MCF 10A (cell line): ENCODE measurements at regions of chr7 and their contacts with region 1.

Region 1: GRCh38 chr7:16982640-16983350 is 101.0 kb upstream of the AGR3 start:
- DNase-seq: peak; percentile 57
- H3K4me3 Mint-ChIP-seq: no peak overlapping the region
- H3K27ac Mint-ChIP-seq: no peak overlapping the region
- H3K4me1 Mint-ChIP-seq: peaks cover 26% of the 10 kb centered on the region
- H3K27me3 Mint-ChIP-seq: no peaks in the 10 kb centered on the region
- CTCF ChIP-seq: peak; percentile 79

Region 2: GRCh38 chr7:17009007-17009719 is 26.4 kb after region 1 on chr7:
- CTCF ChIA-PET with region 1: interaction called, 13 read pairs
- POLR2A ChIA-PET with region 1: interaction called, 3 read pairs
- intact Hi-C with region 1: no loop called
- DNase-seq: peak; percentile 53
- H3K4me3 Mint-ChIP-seq: no peak overlapping the region
- H3K27ac Mint-ChIP-seq: peak overlapping the region; percentile 69
- H3K4me1 Mint-ChIP-seq: peaks cover 29% of the 10 kb centered on the region
- H3K27me3 Mint-ChIP-seq: no peaks in the 10 kb centered on the region
- CTCF ChIP-seq: peak; percentile 26

Region 3: DNA sequence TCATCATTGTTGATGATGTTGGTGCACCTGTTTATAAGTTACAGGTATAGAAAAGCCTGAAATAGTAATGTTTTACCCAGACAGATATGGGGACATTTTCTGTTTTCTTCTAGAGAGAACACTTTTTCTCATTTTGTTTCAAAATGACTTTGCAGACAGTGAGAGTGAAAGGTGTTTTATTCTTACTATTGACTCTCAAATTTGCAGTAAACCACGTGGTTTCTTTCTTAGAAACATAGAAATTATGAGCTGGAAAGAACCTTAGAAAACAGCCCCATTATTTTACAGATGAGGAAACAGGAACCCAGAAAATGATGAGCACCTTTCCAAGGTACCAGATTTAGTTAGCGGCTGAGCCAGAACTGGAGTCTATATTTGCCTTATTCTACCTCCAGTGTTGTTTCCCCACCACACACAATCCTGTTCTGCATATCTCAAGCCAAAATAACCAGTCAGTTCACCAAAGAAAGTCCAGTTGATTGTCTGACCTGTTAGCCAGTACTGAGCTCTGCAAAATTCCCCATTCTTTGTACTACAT is 176.8 kb after region 1 on chr7:
- CTCF ChIA-PET with region 1: no interaction called
- POLR2A ChIA-PET with region 1: no interaction called
- intact Hi-C with region 1: loop called (anchors 2 kb)
- DNase-seq: no peak
- H3K4me3 Mint-ChIP-seq: no peak overlapping the region
- H3K27ac Mint-ChIP-seq: no peak overlapping the region
- H3K4me1 Mint-ChIP-seq: no peaks in the 10 kb centered on the region
- H3K27me3 Mint-ChIP-seq: no peaks in the 10 kb centered on the region
- CTCF ChIP-seq: no peak

Region 4: GRCh38 chr7:17370092-17370491 is 387.3 kb after region 1 on chr7:
- CTCF ChIA-PET with region 1: interaction called, 4 read pairs
- POLR2A ChIA-PET with region 1: no interaction called
- intact Hi-C with region 1: loop called (anchors 10 kb)
- DNase-seq: peak; percentile 94
- H3K4me3 Mint-ChIP-seq: peak overlapping the region; percentile 9
- H3K27ac Mint-ChIP-seq: peak overlapping the region; percentile 89
- H3K4me1 Mint-ChIP-seq: peaks cover 27% of the 10 kb centered on the region
- H3K27me3 Mint-ChIP-seq: no peaks in the 10 kb centered on the region
- CTCF ChIP-seq: no peak

Region 5: GRCh38 chr7:17462034-17462695 is 479.4 kb after region 1 on chr7:
- CTCF ChIA-PET with region 1: no interaction called
- POLR2A ChIA-PET with region 1: no interaction called
- intact Hi-C with region 1: no loop called
- DNase-seq: no peak
- H3K4me3 Mint-ChIP-seq: no peak overlapping the region
- H3K27ac Mint-ChIP-seq: no peak overlapping the region
- H3K4me1 Mint-ChIP-seq: peaks cover 10% of the 10 kb centered on the region
- H3K27me3 Mint-ChIP-seq: no peaks in the 10 kb centered on the region
- CTCF ChIP-seq: no peak

Region 6: DNA sequence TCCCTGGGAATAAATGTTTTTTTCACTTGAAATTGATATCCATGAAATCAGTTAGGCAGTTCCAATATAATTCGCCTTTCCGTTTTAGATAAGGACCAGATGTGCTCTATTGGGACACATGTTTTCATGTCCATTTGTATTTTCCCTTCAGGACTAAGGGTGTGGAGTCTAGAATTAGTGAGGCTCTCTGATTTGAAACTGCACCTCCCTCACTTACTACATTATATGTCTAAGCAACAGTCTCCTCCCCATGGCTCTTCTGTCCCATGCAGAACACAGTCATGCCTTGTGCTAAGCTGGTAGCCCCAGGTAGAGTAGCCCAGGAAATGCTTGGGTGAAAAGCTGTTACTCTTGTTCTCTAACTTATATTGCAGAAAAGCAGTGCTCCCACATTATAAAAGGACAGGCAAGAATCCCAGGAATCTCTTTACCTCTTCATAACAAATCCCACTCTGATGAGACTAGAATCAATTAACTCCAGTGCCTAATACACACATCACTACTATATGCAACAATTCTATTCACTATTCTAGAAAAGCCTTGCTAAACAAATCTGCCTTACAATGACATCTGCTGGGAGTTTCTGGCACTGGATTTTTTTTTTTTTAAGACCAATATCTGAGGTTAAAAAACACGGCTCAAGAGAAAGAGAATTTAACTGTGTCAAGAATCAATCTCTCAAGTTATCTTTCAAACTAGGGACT is 663.6 kb after region 1 on chr7:
- CTCF ChIA-PET with region 1: interaction called, 9 read pairs
- POLR2A ChIA-PET with region 1: interaction called, 3 read pairs
- intact Hi-C with region 1: loop called (anchors 1 kb)
- DNase-seq: peak; percentile 43
- H3K4me3 Mint-ChIP-seq: no peak overlapping the region
- H3K27ac Mint-ChIP-seq: no peak overlapping the region
- H3K4me1 Mint-ChIP-seq: peaks cover 19% of the 10 kb centered on the region
- H3K27me3 Mint-ChIP-seq: no peaks in the 10 kb centered on the region
- CTCF ChIP-seq: peak; percentile 51